Vagina (tissue), 2 donors: ENCODE measurements at regions of chr20 and their contacts with region 1.

Region 1: DNA sequence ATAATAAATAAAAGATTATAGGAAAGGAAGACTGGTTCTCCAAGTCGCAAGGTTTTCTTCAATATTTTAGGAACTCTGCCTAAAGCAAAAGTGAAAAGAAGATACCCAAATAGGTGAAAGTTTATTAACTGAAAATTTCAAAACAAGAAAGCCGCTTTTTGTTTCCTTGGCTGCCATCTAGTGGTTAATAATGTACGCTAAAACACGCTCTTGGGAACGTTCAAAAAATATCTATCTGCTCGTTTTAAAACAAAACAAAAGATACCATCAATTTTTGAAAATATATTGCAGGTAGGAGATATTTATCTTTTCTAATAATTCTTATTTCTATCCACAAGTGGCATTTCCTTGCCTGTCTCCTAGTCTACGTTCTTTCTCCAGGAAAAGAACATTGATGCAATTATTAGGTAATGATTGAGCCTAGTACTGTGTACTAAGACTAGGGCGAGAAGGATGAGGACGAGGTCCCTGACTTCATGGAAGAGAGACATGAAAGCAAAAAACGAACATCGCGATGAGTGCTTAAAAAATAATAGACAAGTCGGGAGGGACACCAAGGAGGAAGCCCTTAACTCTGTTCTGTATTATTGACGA is 97.2 kb downstream of the SPTLC3 start:
- DNase-seq: no peak
- H3K4me3 ChIP-seq: no peak overlapping the region
- H3K27ac ChIP-seq: no peak overlapping the region
- H3K4me1 ChIP-seq: peaks cover 6% of the 10 kb centered on the region
- H3K27me3 ChIP-seq: no peaks in the 10 kb centered on the region
- CTCF ChIP-seq: peak; percentile 24 to 78 (median 65)
- POLR2A ChIP-seq: no peak

Region 2: GRCh38 chr20:12966468-12967341 is 139.3 kb before region 1 on chr20:
- intact Hi-C with region 1: loop called (anchors 10 kb)
- DNase-seq: no peak
- H3K4me3 ChIP-seq: no peak overlapping the region
- H3K27ac ChIP-seq: no peak overlapping the region
- H3K4me1 ChIP-seq: peaks cover 10% of the 10 kb centered on the region
- H3K27me3 ChIP-seq: no peaks in the 10 kb centered on the region
- CTCF ChIP-seq: peak in 1 of 3 experiments; percentile 13
- POLR2A ChIP-seq: no peak

Region 3: DNA sequence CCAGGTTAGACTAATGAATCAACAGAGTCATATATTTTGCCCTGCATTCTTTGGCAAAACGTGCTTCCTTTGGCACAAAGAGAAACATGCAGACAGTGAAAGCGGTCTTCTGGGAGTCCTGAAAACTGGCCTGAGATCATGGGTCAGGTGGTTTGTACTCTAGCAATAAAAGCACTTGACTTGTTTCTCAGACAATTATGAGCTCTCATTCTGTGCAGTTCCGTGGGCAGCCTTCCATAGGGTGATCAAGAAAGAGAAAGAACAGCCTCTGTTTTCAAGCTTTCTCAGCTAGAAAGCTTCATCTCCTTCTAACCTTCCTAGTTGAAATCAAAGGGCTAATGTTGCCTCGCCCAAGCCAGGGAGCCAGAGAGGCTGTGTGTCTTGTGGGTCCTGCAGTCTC is 52.4 kb after region 1 on chr20:
- intact Hi-C with region 1: no loop called
- DNase-seq: no peak
- H3K4me3 ChIP-seq: no peak overlapping the region
- H3K27ac ChIP-seq: no peak overlapping the region
- H3K4me1 ChIP-seq: peaks cover 10% of the 10 kb centered on the region
- H3K27me3 ChIP-seq: no peaks in the 10 kb centered on the region
- CTCF ChIP-seq: no peak
- POLR2A ChIP-seq: no peak